ENCODE measurements at regions of chr12 and their contacts with region 1.

Region 1: DNA sequence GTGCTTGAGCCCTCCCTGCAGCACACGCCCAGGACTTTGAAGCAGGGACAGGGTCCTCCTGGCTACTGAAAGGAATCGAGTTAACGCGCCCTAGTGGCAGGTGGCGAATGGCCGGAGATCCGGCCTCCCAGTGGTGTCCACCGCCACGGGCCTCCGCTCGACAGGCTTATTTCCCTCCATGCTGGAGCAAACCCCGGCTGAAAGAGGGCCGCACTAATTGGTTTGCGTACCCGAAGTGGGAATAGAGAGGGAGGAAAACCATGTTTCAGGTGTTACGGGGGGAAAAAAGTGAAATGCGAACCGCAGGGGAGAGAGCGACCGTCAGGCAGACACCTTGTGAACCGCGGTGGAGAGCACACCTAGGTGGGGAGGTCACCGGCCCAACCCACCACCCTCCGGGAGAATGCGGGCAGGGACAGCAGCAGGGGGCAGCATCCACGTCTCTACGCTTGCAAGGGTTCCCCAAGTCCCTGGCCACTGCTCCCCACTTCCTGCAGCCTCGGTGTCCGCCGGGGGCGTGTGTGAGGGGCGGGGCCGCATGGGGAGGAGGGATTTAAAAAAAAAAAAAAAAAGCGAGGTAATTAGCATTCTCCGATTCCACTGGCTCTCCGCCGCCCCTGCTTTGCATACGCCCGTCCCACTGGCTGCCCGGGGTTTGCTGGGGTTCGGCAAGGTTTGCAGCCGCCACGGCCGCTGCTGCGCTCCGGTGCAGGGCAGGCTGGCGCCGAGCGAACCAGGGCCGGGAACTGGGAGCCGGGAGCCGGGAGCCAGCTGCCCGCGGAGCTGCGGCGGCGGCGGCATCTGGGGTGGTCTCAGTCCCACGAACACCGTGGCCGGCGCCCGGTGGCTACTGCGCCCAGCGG is 224.6 kb upstream of the CRY1 start:
- DNase-seq: peak; percentile 95
- ATAC-seq: peak; percentile 77
- H3K4me3 Mint-ChIP-seq: peak overlapping the region; percentile 88
- H3K27ac Mint-ChIP-seq: peak overlapping the region; percentile 18
- H3K4me1 Mint-ChIP-seq: peaks cover 34% of the 10 kb centered on the region
- H3K27me3 Mint-ChIP-seq: peaks cover 32% of the 10 kb centered on the region

Region 2: DNA sequence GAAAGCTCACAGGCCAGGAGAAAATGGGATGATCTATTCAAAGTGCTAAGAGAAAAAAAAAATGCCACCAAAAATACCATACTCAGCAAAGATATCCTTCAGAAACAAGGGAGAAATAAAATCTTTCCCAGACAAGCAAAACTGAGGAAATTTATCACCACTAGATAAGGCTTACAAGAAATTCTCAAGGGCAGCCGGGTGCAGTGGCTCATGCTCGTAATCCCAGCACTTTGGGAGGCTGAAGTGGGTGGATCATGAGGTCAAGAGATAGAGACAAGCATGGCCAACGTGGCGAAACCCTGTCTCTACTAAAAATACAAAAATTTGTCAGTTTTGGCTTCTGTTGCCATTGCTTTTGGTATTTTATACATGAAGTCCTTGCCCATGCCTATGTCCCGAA is 272.8 kb before region 1 on chr12:
- CTCF ChIA-PET with region 1: no interaction called
- POLR2A ChIA-PET with region 1: no interaction called
- DNase-seq: no peak
- ATAC-seq: no peak
- H3K4me3 Mint-ChIP-seq: no peak overlapping the region
- H3K27ac Mint-ChIP-seq: no peak overlapping the region
- H3K4me1 Mint-ChIP-seq: no peaks in the 10 kb centered on the region
- H3K27me3 Mint-ChIP-seq: no peaks in the 10 kb centered on the region

Region 3: GRCh38 chr12:107328442-107329133 is 10.6 kb after region 1 on chr12:
- CTCF ChIA-PET with region 1: interaction called, 10 read pairs
- POLR2A ChIA-PET with region 1: interaction called, 29 read pairs
- DNase-seq: peak; percentile 48
- ATAC-seq: peak; percentile 40
- H3K4me3 Mint-ChIP-seq: no peak overlapping the region
- H3K27ac Mint-ChIP-seq: no peak overlapping the region
- H3K4me1 Mint-ChIP-seq: peaks cover 90% of the 10 kb centered on the region
- H3K27me3 Mint-ChIP-seq: no peaks in the 10 kb centered on the region

Region 4: GRCh38 chr12:107337346-107338095 is 19.5 kb after region 1 on chr12:
- CTCF ChIA-PET with region 1: interaction called, 10 read pairs
- POLR2A ChIA-PET with region 1: interaction called, 29 read pairs
- DNase-seq: peak; percentile 40
- ATAC-seq: peak; percentile 38
- H3K4me3 Mint-ChIP-seq: no peak overlapping the region
- H3K27ac Mint-ChIP-seq: peak overlapping the region; percentile 50
- H3K4me1 Mint-ChIP-seq: peaks cover 48% of the 10 kb centered on the region
- H3K27me3 Mint-ChIP-seq: no peaks in the 10 kb centered on the region

Region 5: DNA sequence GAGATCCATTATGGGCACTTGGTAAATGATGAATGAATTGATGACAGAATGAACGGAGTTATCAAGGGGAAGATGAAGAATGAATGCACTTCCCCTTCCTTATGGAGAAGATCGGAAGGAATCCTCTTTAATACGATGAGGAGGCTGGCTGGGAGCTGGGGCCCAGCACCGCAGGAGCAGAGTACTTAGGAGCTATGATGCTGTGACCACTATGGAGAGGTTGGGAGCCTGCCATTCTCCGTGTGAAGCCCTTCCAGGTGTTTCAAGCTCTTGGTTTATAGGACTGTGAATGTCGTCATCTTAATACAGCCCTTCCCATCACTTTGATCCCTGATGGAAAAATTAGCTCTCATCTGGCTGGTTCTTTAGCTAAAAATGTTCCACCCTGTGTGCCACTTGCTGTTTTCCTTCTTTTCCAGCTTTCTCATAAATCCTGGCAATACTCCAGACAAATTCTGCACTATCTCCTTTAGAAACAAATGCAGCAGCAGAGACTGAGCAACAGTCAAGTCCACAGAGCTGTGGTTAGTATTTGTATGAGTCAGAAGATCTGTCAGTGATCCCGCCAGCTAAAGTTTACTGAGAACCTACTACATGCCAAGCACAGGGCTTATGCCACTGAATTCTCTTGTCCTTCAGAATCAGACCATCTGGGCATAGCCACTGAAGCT is 38.4 kb after region 1 on chr12:
- CTCF ChIA-PET with region 1: interaction called, 42 read pairs
- POLR2A ChIA-PET with region 1: interaction called, 10 read pairs
- DNase-seq: peak; percentile 36
- ATAC-seq: peak; percentile 71
- H3K4me3 Mint-ChIP-seq: no peak overlapping the region
- H3K27ac Mint-ChIP-seq: no peak overlapping the region
- H3K4me1 Mint-ChIP-seq: peaks cover 84% of the 10 kb centered on the region
- H3K27me3 Mint-ChIP-seq: no peaks in the 10 kb centered on the region

Region 6: DNA sequence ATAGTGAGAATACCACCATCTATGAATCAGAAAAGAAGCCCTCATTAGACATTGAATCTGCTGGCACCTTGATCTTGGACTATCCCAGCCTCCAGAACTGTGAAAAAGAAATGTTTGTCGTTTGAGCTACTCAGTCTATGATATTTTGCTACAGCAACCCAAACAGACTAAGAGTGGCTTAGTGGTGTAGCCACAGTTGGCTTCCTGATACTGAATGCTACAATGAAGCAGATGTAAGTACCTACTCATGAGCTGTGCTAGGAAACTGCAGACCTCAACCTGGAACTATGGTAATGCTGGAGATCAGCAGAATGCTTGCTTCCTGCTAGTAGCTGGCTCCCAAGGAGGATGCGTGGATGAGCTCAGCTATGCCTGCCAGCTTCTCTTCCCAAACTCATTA is 44.0 kb after region 1 on chr12:
- CTCF ChIA-PET with region 1: interaction called, 42 read pairs
- POLR2A ChIA-PET with region 1: interaction called, 13 read pairs
- DNase-seq: peak; percentile 46
- ATAC-seq: peak; percentile 70
- H3K4me3 Mint-ChIP-seq: no peak overlapping the region
- H3K27ac Mint-ChIP-seq: peak overlapping the region; percentile 8
- H3K4me1 Mint-ChIP-seq: peaks cover 69% of the 10 kb centered on the region
- H3K27me3 Mint-ChIP-seq: no peaks in the 10 kb centered on the region

Region 7: DNA sequence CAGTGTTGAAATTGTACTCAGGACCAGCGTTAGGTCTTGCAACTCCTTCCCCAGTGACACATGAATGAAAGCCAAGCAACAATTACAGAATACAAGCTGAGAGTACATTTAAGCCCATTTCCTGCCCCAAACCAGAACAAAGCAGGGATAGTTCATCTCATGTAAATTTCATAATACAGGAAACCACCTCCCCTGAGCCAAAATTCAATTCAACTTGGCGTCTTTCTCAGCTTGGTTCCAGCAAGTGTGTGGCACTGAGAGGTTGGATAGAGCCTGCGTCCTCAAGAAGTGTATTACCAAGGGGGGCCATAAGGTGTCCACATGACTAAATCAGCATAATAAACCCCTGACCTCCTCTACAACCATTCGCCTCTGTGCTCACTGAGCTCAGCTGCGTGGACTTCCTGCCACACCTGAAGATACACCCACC is 54.3 kb after region 1 on chr12:
- CTCF ChIA-PET with region 1: interaction called, 55 read pairs
- POLR2A ChIA-PET with region 1: interaction called, 145 read pairs
- DNase-seq: peak; percentile 73
- ATAC-seq: peak; percentile 59
- H3K4me3 Mint-ChIP-seq: peak overlapping the region; percentile 68
- H3K27ac Mint-ChIP-seq: peak overlapping the region; percentile 95
- H3K4me1 Mint-ChIP-seq: peaks cover 75% of the 10 kb centered on the region
- H3K27me3 Mint-ChIP-seq: no peaks in the 10 kb centered on the region

Region 8: GRCh38 chr12:107461222-107461975 is 143.4 kb after region 1 on chr12:
- CTCF ChIA-PET with region 1: no interaction called
- POLR2A ChIA-PET with region 1: no interaction called
- DNase-seq: no peak
- ATAC-seq: no peak
- H3K4me3 Mint-ChIP-seq: no peak overlapping the region
- H3K27ac Mint-ChIP-seq: no peak overlapping the region
- H3K4me1 Mint-ChIP-seq: peaks cover 5% of the 10 kb centered on the region
- H3K27me3 Mint-ChIP-seq: no peaks in the 10 kb centered on the region